Activated CD4-positive, alpha-beta T cell treated with anti-CD3 and anti-CD28 coated beads, Interleukin-2, amount 10 ng/mL, durations not matched to agents 7 days and 5 days (primary cell): ENCODE measurements at regions of chr15 and their contacts with region 1.

Region 1: DNA sequence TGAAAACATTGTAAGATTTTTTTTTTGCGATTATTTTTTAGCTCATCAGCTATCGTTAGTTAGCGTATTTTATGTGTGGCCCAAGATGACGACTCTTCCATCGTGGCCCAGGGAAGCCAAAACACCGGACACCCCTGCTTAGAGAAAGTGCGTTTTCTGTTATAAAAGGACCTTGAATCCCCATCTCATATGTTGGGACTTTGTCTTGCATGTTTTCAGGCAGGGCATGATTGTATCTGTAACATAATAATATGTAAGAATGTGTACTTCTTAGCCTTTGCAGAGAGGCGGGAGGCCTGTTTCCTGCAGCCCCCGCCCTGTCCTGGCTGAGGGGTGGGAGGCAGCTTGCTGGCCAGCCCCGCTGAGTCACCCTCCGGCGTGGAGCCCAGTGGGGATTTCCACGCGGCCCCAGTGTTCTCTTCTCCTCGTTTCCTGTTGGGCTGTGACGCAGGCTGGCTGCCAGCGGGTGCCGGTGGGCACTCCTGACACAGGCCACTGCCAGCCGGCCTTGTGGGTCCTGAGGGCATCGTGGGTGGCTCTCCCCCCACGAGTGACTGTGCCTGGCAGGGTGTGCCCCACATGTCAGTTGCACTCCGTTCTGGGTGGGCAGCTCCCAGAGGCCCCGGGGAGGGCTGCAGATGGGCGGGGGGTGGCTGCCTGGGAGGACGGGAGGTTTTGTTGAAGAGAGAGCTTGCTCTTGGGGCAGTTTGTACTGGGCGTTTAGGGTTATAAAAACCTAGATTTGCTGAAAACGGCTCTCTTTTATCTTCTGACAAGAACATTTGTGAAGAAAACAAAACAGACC is 55.6 kb downstream of the SMAD3 start:
- DNase-seq: peak; percentile 82
- H3K4me3 Mint-ChIP-seq: peak overlapping the region; percentile 61
- H3K27ac Mint-ChIP-seq: peak overlapping the region; percentile 89
- H3K4me1 Mint-ChIP-seq: peaks cover 95% of the 10 kb centered on the region
- H3K27me3 Mint-ChIP-seq: no peaks in the 10 kb centered on the region

Region 2: GRCh38 chr15:67093504-67093862 is 27.6 kb before region 1 on chr15:
- CTCF ChIA-PET with region 1: no interaction called
- POLR2A ChIA-PET with region 1: no interaction called
- DNase-seq: no peak
- H3K4me3 Mint-ChIP-seq: no peak overlapping the region
- H3K27ac Mint-ChIP-seq: peak overlapping the region; percentile 6
- H3K4me1 Mint-ChIP-seq: peaks cover 95% of the 10 kb centered on the region
- H3K27me3 Mint-ChIP-seq: no peaks in the 10 kb centered on the region

Region 3: GRCh38 chr15:67134067-67134838 is 13.2 kb after region 1 on chr15:
- CTCF ChIA-PET with region 1: interaction called, 19 read pairs
- POLR2A ChIA-PET with region 1: interaction called, 6 read pairs
- DNase-seq: peak; percentile 82
- H3K4me3 Mint-ChIP-seq: peak overlapping the region; percentile 75
- H3K27ac Mint-ChIP-seq: peak overlapping the region; percentile 88
- H3K4me1 Mint-ChIP-seq: peaks cover 97% of the 10 kb centered on the region
- H3K27me3 Mint-ChIP-seq: no peaks in the 10 kb centered on the region